ENCODE measurements at regions of chr3 and their contacts with region 1.

Region 1: GRCh38 chr3:129383292-129383860 is 45.1 kb downstream of the EFCAB12 start:
- DNase-seq: peak; percentile 73 to 79
- H3K4me3 ChIP-seq: no peak overlapping the region
- H3K4me3 Mint-ChIP-seq: no peak overlapping the region
- H3K27ac Mint-ChIP-seq: no peak overlapping the region
- H3K4me1 ChIP-seq: no peaks in the 10 kb centered on the region
- H3K4me1 Mint-ChIP-seq: peaks cover 5% of the 10 kb centered on the region
- H3K27me3 ChIP-seq: no peaks in the 10 kb centered on the region
- H3K27me3 Mint-ChIP-seq: no peaks in the 10 kb centered on the region
- CTCF ChIP-seq: peak; percentile 82 to 88

Region 2: DNA sequence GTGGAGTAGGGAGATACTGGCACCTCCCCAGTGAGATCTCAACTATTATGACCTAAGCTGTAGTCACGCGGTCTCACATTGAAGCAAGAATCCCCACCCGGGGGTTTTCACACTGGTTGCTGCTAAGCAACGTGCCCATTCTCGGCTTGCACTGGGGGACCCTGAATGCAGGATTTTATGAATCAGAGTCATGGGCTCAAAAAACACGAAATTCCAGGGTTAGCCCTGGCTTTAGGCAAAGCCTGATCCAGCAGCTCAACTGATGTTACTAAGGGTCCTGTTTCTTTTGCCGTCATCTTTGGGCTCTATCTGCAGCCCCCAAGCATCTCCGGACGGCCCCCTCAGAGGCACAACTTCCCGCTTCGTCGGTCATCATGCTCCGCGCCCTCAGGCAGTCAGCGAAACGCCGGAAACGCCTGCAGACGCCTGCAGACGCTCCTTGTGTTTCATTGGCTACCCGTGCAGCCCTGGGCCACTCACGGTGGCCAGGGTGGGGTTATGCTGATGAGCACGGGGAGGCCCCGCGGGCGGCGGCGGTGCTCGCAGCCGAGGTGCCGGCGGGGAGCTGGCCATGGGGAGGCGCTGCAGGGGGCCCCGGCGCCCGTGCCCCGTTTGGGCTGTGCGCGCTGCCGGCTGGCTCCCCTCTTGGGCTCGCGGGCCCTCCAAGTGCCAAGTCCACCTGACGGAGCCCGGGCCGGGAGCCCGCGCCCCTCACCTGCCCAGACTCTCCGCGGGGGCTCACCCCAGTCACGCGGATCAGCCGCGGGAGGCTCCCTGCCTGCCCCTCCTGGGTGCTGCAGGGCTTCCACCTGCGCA is 356.4 kb before region 1 on chr3:
- CTCF ChIA-PET with region 1: no interaction called
- POLR2A ChIA-PET with region 1: no interaction called
- intact Hi-C with region 1: no loop called
- DNase-seq: peak; percentile 93 to 95
- H3K4me3 ChIP-seq: peak overlapping the region; percentile 44
- H3K4me3 Mint-ChIP-seq: peak overlapping the region; percentile 77
- H3K27ac Mint-ChIP-seq: peak overlapping the region; percentile 73
- H3K4me1 ChIP-seq: peaks cover 6% of the 10 kb centered on the region; the same call in 1 of the 2 replicates
- H3K4me1 Mint-ChIP-seq: peaks cover 7% of the 10 kb centered on the region
- H3K27me3 ChIP-seq: no peaks in the 10 kb centered on the region
- H3K27me3 Mint-ChIP-seq: peaks cover 3% of the 10 kb centered on the region
- CTCF ChIP-seq: peak; percentile 48 to 67

Region 3: DNA sequence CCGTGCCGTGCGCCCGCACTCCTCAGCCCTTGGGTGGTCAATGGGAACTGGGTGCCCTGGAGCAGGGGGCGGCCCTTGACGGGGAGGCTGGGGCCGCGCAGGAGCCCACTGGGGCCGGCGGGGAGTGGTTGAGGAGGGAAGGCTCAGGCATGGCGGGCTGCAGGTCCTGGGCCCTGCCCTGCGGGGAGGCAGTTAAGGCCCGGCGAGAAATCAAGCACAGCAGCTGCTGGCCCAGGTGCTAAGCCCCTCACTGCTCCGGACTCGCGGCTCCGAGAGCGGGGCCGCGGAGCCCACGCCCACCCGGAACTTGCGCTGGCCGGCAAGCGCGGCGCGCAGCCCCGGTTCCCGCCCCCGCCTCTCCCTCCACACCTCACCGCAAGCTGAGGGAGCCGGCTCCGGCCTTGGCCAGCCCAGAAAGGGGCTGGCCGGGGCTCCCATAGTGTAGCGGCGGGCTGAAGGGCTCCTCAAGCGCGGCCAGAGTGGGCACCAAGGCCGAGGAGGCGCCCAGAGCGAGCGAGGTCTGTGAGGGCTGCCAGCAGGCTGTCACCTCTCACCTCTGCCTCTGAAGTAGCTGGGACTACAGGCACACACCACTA is 315.0 kb before region 1 on chr3:
- CTCF ChIA-PET with region 1: no interaction called
- POLR2A ChIA-PET with region 1: no interaction called
- intact Hi-C with region 1: no loop called
- DNase-seq: no peak
- H3K4me3 ChIP-seq: no peak overlapping the region
- H3K4me3 Mint-ChIP-seq: no peak overlapping the region
- H3K27ac Mint-ChIP-seq: no peak overlapping the region
- H3K4me1 ChIP-seq: no peaks in the 10 kb centered on the region
- H3K4me1 Mint-ChIP-seq: no peaks in the 10 kb centered on the region
- H3K27me3 ChIP-seq: no peaks in the 10 kb centered on the region
- H3K27me3 Mint-ChIP-seq: no peaks in the 10 kb centered on the region
- CTCF ChIP-seq: no peak

Region 4: GRCh38 chr3:129428376-129429079 is 45.2 kb after region 1 on chr3 and contains the start of gene EFCAB12:
- CTCF ChIA-PET with region 1: interaction called, 10 read pairs
- POLR2A ChIA-PET with region 1: no interaction called
- intact Hi-C with region 1: loop called (anchors 5 kb)
- DNase-seq: peak; percentile 92 to 94
- H3K4me3 ChIP-seq: peak within 1 kb of the TSS; percentile 50
- H3K4me3 Mint-ChIP-seq: peak within 1 kb of the TSS; percentile 71
- H3K27ac Mint-ChIP-seq: peak within 1 kb of the TSS; percentile 34
- H3K4me1 ChIP-seq: 0 out of 2 replicates have a peak, but pooled peaks cover 6% of the 10 kb centered on the region
- H3K4me1 Mint-ChIP-seq: peaks cover 21% of the 10 kb centered on the region
- H3K27me3 ChIP-seq: no peaks in the 10 kb centered on the region
- H3K27me3 Mint-ChIP-seq: peaks cover 3% of the 10 kb centered on the region
- CTCF ChIP-seq: no peak
- total RNA-seq, gene EFCAB12: 0.14 and 0.49 TPM in 2 replicates

Region 5: GRCh38 chr3:129490242-129491045 is 107.1 kb after region 1 on chr3:
- CTCF ChIA-PET with region 1: interaction called, 36 read pairs
- POLR2A ChIA-PET with region 1: no interaction called
- intact Hi-C with region 1: loop called (anchors 5 kb)
- DNase-seq: peak; percentile 76 to 77
- H3K4me3 ChIP-seq: no peak overlapping the region
- H3K4me3 Mint-ChIP-seq: no peak overlapping the region
- H3K27ac Mint-ChIP-seq: peak overlapping the region; percentile 59
- H3K4me1 ChIP-seq: peaks cover 3% of the 10 kb centered on the region
- H3K4me1 Mint-ChIP-seq: peaks cover 17% of the 10 kb centered on the region
- H3K27me3 ChIP-seq: no peaks in the 10 kb centered on the region
- H3K27me3 Mint-ChIP-seq: no peaks in the 10 kb centered on the region
- CTCF ChIP-seq: peak; percentile 65 to 83

Region 6: GRCh38 chr3:129600348-129600747 is 217.0 kb after region 1 on chr3:
- CTCF ChIA-PET with region 1: no interaction called
- POLR2A ChIA-PET with region 1: no interaction called
- intact Hi-C with region 1: no loop called
- DNase-seq: no peak
- H3K4me3 ChIP-seq: no peak overlapping the region
- H3K4me3 Mint-ChIP-seq: no peak overlapping the region
- H3K27ac Mint-ChIP-seq: no peak overlapping the region
- H3K4me1 ChIP-seq: peaks cover 17% of the 10 kb centered on the region
- H3K4me1 Mint-ChIP-seq: peaks cover 17% of the 10 kb centered on the region
- H3K27me3 ChIP-seq: no peaks in the 10 kb centered on the region
- H3K27me3 Mint-ChIP-seq: no peaks in the 10 kb centered on the region
- CTCF ChIP-seq: no peak

Region 7: GRCh38 chr3:129824926-129825541 is 441.7 kb after region 1 on chr3:
- CTCF ChIA-PET with region 1: interaction called, 3 read pairs
- POLR2A ChIA-PET with region 1: no interaction called
- intact Hi-C with region 1: loop called (anchors 1 kb)
- DNase-seq: peak; percentile 47 to 72
- H3K4me3 ChIP-seq: no peak overlapping the region
- H3K4me3 Mint-ChIP-seq: no peak overlapping the region
- H3K27ac Mint-ChIP-seq: no peak overlapping the region
- H3K4me1 ChIP-seq: peaks cover 12% of the 10 kb centered on the region; the same call in 1 of the 2 replicates
- H3K4me1 Mint-ChIP-seq: peaks cover 14% of the 10 kb centered on the region
- H3K27me3 ChIP-seq: no peaks in the 10 kb centered on the region
- H3K27me3 Mint-ChIP-seq: no peaks in the 10 kb centered on the region
- CTCF ChIP-seq: peak; percentile 58 to 77